ENCODE measurements at regions of chr7 and their contacts with region 1.

Region 1: DNA sequence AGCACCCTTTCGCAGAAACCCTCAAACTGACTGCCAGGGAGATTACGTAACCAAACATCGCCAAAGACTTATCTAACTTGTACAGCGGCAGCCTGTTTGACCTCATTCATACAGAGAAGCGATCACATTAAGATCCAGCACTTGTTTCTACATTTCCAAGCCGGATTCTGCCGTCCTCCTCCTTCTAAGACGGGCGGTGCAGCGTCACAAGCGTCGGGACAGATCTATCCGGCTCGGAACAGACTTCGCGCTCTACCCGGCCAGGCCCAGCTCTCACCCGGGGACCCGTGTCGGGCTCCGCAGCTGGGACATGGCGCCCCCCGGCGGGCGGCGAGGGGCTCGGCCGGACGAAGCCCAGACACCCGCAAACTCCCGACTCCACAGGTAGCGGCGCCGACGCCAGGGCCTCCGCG is 373 bp downstream of the H2AZ2 start:
- DNase-seq: peak; percentile 94
- H3K4me3 ChIP-seq: peak overlapping the region; percentile 64 to 83 (median 74)
- H3K27ac ChIP-seq: peak overlapping the region; percentile 92 to 99 (median 97)
- H3K4me1 ChIP-seq: peaks cover 0 to 54% (median 44%) of the 10 kb centered on the region in 4 donors
- H3K27me3 ChIP-seq: no peaks in the 10 kb centered on the region
- CTCF ChIP-seq: peak; percentile 46 to 91 (median 64)
- EP300 ChIP-seq: no peak
- POLR2A ChIP-seq: peak; percentile 7 to 23

Region 2: GRCh38 chr7:44530990-44531389 is 316.5 kb before region 1 on chr7:
- intact Hi-C with region 1: no loop called
- DNase-seq: no peak
- H3K4me3 ChIP-seq: no peak overlapping the region
- H3K27ac ChIP-seq: no peak overlapping the region
- H3K4me1 ChIP-seq: no peaks in the 10 kb centered on the region
- H3K27me3 ChIP-seq: no peaks in the 10 kb centered on the region
- CTCF ChIP-seq: no peak
- EP300 ChIP-seq: no peak
- POLR2A ChIP-seq: no peak

Region 3: DNA sequence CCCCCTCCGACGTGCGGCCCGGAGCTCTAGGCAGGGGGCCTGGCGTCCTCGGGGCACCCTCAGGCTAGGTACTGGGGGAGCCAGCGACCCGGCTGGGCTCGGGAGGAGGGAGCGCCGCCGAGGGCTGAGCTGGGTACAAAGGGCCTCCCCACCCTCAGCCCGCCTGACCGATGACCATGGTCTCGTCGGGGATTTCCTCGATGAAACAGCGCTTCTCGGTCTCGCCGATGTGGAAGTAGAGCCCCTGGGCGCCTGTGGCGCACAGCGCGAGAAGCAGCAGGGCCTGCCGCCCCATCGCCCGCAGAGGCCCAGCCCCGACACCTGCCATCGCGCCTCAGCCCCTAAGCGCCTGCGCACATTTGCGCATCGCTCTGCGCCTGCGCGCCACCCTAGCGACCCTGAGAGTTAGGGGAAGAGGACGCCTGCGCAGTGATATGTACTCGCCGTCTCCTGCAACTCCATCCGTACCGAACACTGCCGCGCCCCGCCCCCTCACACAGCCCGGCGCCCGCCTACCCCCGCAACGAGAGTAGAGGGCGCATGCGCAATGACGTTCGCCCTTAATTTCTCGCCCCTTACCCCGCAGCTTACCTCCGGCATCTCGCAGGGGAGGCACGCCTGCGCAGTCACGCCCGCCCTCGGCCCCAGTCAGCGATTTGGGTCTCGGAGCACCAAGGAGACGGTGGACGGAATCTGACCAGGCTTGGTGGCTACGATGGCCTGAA is 265.5 kb before region 1 on chr7 and contains the start of gene TMED4:
- intact Hi-C with region 1: loop called (anchors 2 kb)
- DNase-seq: peak; percentile 100
- H3K4me3 ChIP-seq: peak within 1 kb of the TSS; percentile 80 to 98 (median 88)
- H3K27ac ChIP-seq: peak within 1 kb of the TSS; percentile 94 to 98 (median 97)
- H3K4me1 ChIP-seq: peaks cover 0 to 27% (median 21%) of the 10 kb centered on the region in 4 donors
- H3K27me3 ChIP-seq: no peaks in the 10 kb centered on the region
- CTCF ChIP-seq: no peak
- EP300 ChIP-seq: peak in 1 of 4 donors; percentile 33
- POLR2A ChIP-seq: peak; percentile 73 to 76
- total RNA-seq, gene TMED4: 114 to 209 (median 154) TPM

Region 4: DNA sequence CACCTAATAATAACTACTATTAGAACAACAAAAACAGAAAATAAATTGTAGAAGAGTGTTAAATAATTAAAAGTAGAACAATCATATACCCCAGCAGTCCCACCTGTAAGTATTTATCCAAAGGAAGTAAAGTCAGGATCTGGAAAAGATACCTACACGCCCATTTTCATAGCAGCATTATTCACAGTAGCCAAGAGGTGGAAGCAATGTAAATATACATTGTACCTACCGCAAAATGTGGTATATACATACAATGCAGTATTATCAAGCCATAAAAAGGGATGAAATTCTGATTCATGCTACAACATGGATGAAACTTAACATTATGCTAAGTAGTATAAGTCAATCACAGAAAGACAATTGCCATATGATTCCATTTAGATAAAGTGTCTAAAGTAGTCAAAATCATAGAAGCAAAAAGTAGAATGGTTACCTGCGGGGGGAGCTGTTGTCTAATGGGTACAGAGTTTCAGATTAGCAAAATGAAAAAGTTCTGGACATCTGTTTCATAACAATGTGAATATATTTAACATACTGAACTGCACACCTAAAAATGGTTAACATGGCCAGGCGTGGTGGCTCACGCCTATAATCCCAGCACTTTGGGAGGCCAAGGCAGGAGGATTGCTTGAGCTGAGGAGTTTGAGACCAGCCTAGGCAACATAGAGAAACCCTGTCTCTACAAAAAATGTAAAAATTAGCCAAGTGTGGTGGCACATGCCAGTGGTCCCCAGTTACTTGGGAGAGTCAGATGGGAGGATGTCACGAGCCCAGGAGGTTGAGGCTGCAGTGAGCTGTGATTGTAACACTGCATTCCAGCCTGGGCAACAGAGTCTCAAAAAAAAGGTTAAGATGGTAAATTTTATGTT is 259.4 kb before region 1 on chr7:
- intact Hi-C with region 1: loop called (anchors 1 kb)
- DNase-seq: no peak
- H3K4me3 ChIP-seq: no peak overlapping the region
- H3K27ac ChIP-seq: no peak overlapping the region
- H3K4me1 ChIP-seq: peaks cover 0 to 2% (median under 1%) of the 10 kb centered on the region in 4 donors
- H3K27me3 ChIP-seq: no peaks in the 10 kb centered on the region
- CTCF ChIP-seq: peak in 3 of 4 experiments; percentile 21 to 57 (median 54)
- EP300 ChIP-seq: no peak
- POLR2A ChIP-seq: no peak

Region 5: GRCh38 chr7:44606450-44607254 is 240.9 kb before region 1 on chr7 and contains the start of gene OGDH:
- intact Hi-C with region 1: loop called (anchors 1 kb)
- DNase-seq: peak; percentile 100
- H3K4me3 ChIP-seq: peak within 1 kb of the TSS; percentile 70 to 97 (median 78)
- H3K27ac ChIP-seq: peak within 1 kb of the TSS; percentile 97 to 100 (median 98)
- H3K4me1 ChIP-seq: peaks cover 0 to 32% (median 25%) of the 10 kb centered on the region in 4 donors
- H3K27me3 ChIP-seq: no peaks in the 10 kb centered on the region
- CTCF ChIP-seq: no peak
- EP300 ChIP-seq: peak in 2 of 4 donors; percentile 66 to 86
- POLR2A ChIP-seq: peak; percentile 57 to 97
- total RNA-seq, gene OGDH: 65.5 to 102 (median 98.3) TPM

Region 6: GRCh38 chr7:44748045-44748947 is 99.2 kb before region 1 on chr7 and contains the start of gene ZMIZ2:
- intact Hi-C with region 1: loop called (anchors 2 kb)
- DNase-seq: peak; percentile 97
- H3K4me3 ChIP-seq: peak within 1 kb of the TSS; percentile 56 to 96 (median 78)
- H3K27ac ChIP-seq: peak within 1 kb of the TSS; percentile 94 to 97 (median 95)
- H3K4me1 ChIP-seq: peaks cover 0 to 32% (median 23%) of the 10 kb centered on the region in 4 donors
- H3K27me3 ChIP-seq: no peaks in the 10 kb centered on the region
- CTCF ChIP-seq: no peak
- EP300 ChIP-seq: no peak
- POLR2A ChIP-seq: peak in 1 of 2 donors; percentile 13
- total RNA-seq, gene ZMIZ2: 11.1 to 44.6 (median 12.5) TPM

Region 7: GRCh38 chr7:44797329-44798251 is 49.9 kb before region 1 on chr7:
- intact Hi-C with region 1: loop called (anchors 2 kb)
- DNase-seq: peak; percentile 95
- H3K4me3 ChIP-seq: peak overlapping the region; percentile 76 to 97 (median 95)
- H3K27ac ChIP-seq: peak overlapping the region; percentile 99 to 100 (median 100)
- H3K4me1 ChIP-seq: peaks cover 0 to 35% (median 26%) of the 10 kb centered on the region in 4 donors
- H3K27me3 ChIP-seq: no peaks in the 10 kb centered on the region
- CTCF ChIP-seq: peak in 2 of 4 experiments; percentile 31 to 35
- EP300 ChIP-seq: no peak
- POLR2A ChIP-seq: peak; percentile 10 to 29

Region 8: GRCh38 chr7:45111298-45112223 is 264.0 kb after region 1 on chr7 and contains the start of gene TBRG4:
- intact Hi-C with region 1: loop called (anchors 5 kb)
- DNase-seq: peak; percentile 96
- H3K4me3 ChIP-seq: peak within 1 kb of the TSS; percentile 66 to 85 (median 71)
- H3K27ac ChIP-seq: peak within 1 kb of the TSS; percentile 88 to 93 (median 90)
- H3K4me1 ChIP-seq: peaks cover 0 to 48% (median 44%) of the 10 kb centered on the region in 4 donors
- H3K27me3 ChIP-seq: no peaks in the 10 kb centered on the region
- CTCF ChIP-seq: peak in 1 of 4 experiments; percentile 14
- EP300 ChIP-seq: peak in 2 of 4 donors; percentile 22 to 53
- POLR2A ChIP-seq: peak; percentile 88 to 91
- total RNA-seq, gene TBRG4: 40.3 to 57.1 (median 46.8) TPM

Measured in sigmoid colon (tissue), 7 donors.